Ascending aorta (tissue), 2 donors: ENCODE measurements at regions of chrX and their contacts with region 1.

Region 1: DNA sequence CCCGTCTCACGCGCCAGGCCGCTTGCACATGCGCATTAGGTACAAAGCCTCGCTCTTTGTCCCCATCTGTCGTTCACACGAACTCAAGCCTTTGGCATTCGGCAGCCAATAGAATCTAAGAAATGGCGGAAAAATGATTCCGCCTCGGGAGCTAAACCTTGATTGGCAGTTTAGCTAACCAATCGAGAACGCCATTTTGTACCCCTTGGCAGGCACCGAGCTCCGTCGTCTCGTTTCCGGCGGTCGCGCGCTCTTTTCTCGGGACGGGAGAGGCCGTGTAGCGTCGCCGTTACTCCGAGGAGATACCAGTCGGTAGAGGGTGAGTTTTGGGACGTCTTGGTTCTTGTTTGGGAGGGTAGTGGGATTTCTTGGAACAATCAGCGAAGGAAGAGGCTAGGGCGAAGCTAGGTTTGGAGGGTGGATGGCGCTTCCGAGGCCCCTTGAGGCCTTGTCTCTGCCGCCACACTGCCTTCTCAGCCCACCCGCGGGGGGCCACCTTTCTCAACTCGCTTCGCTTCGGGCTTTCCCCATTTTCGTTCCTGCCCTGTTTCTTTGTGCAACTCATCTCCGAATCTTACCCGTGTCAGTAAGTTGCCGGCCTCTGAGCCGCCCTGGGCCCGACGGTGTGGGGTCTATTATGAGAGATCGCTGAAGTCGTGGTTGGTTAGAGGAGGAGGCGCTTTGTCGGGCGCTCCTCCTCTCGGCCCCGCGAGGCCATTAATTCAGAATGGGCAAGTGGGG is at the start of gene NONO:
- DNase-seq: peak; percentile 36 to 91
- H3K4me3 ChIP-seq: peak within 1 kb of the TSS; percentile 63 to 64
- H3K27ac ChIP-seq: peak within 1 kb of the TSS; percentile 86 to 89
- H3K4me1 ChIP-seq: no peaks in the 10 kb centered on the region
- H3K27me3 ChIP-seq: no peaks in the 10 kb centered on the region
- CTCF ChIP-seq: peak in 2 of 3 experiments; percentile 11 to 19
- total RNA-seq, gene NONO: 178 TPM

Region 2: GRCh38 chrX:71118032-71118984 is 165.3 kb before region 1 on chrX and contains the start of gene MED12:
- intact Hi-C with region 1: no loop called
- DNase-seq: peak; percentile 33 to 86
- H3K4me3 ChIP-seq: peak within 1 kb of the TSS; percentile 61 to 62
- H3K27ac ChIP-seq: peak within 1 kb of the TSS; percentile 66 to 69
- H3K4me1 ChIP-seq: peaks cover 0 to 4% of the 10 kb centered on the region in 2 donors
- H3K27me3 ChIP-seq: no peaks in the 10 kb centered on the region
- CTCF ChIP-seq: no peak
- total RNA-seq, gene MED12: 36.9 TPM

Region 3: GRCh38 chrX:71254092-71254941 is 29.3 kb before region 1 on chrX and contains the start of gene ZMYM3:
- intact Hi-C with region 1: loop called (anchors 1 kb)
- DNase-seq: peak; percentile 57 to 89
- H3K4me3 ChIP-seq: peak within 1 kb of the TSS; percentile 51 to 73
- H3K27ac ChIP-seq: peak within 1 kb of the TSS; percentile 77 to 91
- H3K4me1 ChIP-seq: peaks cover 2 to 8% of the 10 kb centered on the region in 2 donors
- H3K27me3 ChIP-seq: no peaks in the 10 kb centered on the region
- CTCF ChIP-seq: no peak
- total RNA-seq, gene ZMYM3: 12.5 TPM

Region 4: DNA sequence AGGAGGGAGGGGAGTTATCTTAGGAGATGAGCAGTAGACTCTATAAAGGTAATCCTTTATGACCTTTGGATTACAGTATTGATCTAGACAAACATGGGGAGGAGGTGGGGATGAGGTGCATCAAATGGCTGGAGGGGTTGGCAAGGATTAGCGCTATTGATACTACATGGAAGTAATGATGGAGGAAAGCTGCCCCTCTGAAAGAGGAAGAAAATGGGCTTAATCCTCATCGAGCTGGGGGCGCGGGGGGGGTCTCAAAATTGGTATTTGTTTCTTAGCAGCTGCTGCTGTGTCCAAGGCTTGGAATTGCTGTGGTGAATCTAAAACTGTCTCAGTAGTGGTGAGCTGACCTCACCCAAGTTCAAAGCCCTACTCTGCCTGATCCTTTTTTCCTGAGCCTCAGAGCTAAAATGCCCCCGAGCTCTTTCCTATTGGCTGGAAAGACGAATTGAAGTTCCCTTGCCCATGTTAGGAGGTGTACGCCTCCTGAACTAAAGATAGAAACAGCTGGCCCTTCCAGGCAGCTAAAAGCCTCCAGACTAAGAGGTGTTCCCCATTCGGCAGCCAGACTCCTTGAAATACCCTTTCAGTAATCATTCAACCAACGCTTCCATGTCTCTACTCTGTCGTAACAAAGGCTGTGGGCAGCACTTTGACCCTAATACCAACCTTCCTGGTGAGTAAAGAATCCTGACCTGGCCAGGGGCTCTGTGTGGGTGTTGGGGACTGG is 17.8 kb after region 1 on chrX and contains the start of gene ITGB1BP2:
- intact Hi-C with region 1: loop called (anchors 1 kb)
- DNase-seq: peak in 1 of 2 donors; percentile 66
- H3K4me3 ChIP-seq: peak within 1 kb of the TSS; percentile 21 to 63
- H3K27ac ChIP-seq: peak within 1 kb of the TSS; percentile 58 to 70
- H3K4me1 ChIP-seq: no peaks in the 10 kb centered on the region
- H3K27me3 ChIP-seq: no peaks in the 10 kb centered on the region
- CTCF ChIP-seq: no peak
- total RNA-seq, gene ITGB1BP2: not detected